Caco-2 (cell line): ENCODE measurements at regions of chr19 and their contacts with region 1.

Region 1: DNA sequence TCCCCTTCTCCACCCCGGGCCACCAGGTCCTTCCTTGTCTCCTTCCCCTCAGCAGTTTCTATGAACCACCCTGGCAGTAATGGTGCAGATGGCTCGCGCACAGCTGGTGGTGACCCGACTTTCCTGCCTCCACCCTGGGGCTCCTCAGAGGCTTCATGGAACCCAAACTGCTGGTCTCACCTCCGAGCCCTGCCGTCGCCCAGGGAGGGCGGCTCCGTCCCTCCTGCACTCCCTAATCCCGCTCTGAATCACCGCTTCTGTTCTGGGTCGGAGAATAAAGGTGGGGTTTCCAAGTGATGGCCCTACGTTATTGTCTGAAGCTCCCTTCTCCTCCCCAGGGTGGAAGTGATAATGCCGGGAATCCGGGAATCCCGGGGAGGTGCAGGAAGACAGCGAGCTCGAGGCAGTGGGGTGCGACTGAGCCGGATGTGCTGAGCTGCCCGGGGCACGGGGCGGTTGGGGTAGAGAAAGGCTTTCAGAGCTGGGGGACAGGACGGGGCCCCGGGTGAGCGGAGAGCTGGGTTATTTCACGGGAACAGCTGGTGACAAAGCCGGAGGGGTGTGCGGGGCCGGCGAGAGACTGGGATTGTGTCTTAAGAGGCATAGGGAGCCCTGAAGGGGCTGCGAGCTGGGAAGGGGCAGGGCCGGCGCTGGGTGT is 711 bp downstream of the FUT2 start:
- DNase-seq: peak in 1 of 2 experiments; percentile 38
- H3K4me3 ChIP-seq: peak overlapping the region; percentile 72
- H3K4me3 Mint-ChIP-seq: peak overlapping the region; percentile 99
- H3K27ac Mint-ChIP-seq: peak overlapping the region; percentile 90
- H3K4me1 ChIP-seq: peaks cover 17% of the 10 kb centered on the region
- H3K4me1 Mint-ChIP-seq: peaks cover 7% of the 10 kb centered on the region
- H3K27me3 ChIP-seq: no peaks in the 10 kb centered on the region
- H3K27me3 Mint-ChIP-seq: no peaks in the 10 kb centered on the region
- CTCF ChIP-seq: no peak

Region 2: GRCh38 chr19:48674921-48675824 is 21.3 kb before region 1 on chr19:
- CTCF ChIA-PET with region 1: interaction called, 12 read pairs
- POLR2A ChIA-PET with region 1: no interaction called
- intact Hi-C with region 1: loop called (anchors 1 kb)
- DNase-seq: peak; percentile 88 to 90
- H3K4me3 ChIP-seq: no peak overlapping the region
- H3K4me3 Mint-ChIP-seq: no peak overlapping the region
- H3K27ac Mint-ChIP-seq: peak overlapping the region; percentile 46
- H3K4me1 ChIP-seq: peaks cover 6% of the 10 kb centered on the region
- H3K4me1 Mint-ChIP-seq: peaks cover 13% of the 10 kb centered on the region
- H3K27me3 ChIP-seq: no peaks in the 10 kb centered on the region
- H3K27me3 Mint-ChIP-seq: no peaks in the 10 kb centered on the region
- CTCF ChIP-seq: peak; percentile 88 to 95

Region 3: GRCh38 chr19:48713864-48714758 is 17.6 kb after region 1 on chr19:
- CTCF ChIA-PET with region 1: interaction called, 21 read pairs
- POLR2A ChIA-PET with region 1: interaction called, 12 read pairs
- intact Hi-C with region 1: loop called (anchors 1 kb)
- DNase-seq: peak; percentile 100
- H3K4me3 ChIP-seq: peak overlapping the region; percentile 75
- H3K4me3 Mint-ChIP-seq: peak overlapping the region; percentile 84
- H3K27ac Mint-ChIP-seq: peak overlapping the region; percentile 90
- H3K4me1 ChIP-seq: peaks cover 16% of the 10 kb centered on the region
- H3K4me1 Mint-ChIP-seq: peaks cover 33% of the 10 kb centered on the region
- H3K27me3 ChIP-seq: no peaks in the 10 kb centered on the region
- H3K27me3 Mint-ChIP-seq: no peaks in the 10 kb centered on the region
- CTCF ChIP-seq: no peak

Region 4: DNA sequence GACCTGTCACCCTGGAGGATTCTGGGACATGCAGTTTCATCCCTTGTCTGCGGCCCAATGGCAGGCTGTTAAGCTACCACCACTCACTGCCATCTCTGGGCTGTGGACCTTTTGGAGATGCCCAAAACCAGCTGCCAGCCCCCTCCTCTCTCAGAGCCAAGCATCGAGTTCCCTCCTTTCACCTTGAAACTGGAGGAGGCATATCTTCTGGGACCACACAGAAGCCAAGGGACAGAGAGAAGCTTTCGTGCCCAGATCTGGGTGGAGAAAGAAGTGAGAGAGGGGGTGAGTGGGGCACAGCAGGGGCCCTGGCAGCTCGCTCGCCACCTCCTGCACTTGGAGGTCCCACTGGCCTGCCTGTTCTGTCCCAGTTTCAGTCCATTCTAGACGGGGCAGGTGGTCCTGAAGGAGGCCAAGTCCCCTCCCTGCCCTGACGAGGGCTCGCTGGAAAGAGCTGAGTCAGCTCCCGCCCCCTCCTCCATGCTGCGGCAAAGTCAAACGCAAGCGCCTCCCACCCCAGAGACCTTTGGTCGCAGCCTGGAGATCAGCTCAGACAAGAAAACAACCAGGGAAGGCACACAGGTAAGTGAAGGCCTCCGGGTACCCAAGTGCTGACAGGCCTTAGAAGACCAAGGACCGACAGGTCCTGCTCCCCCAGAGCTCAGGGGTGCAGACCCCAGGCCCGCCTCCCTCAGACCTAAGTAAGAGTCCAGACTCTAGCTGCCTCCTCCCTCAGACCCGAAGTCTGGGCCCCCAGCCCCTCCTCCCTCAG is 110.5 kb after region 1 on chr19:
- CTCF ChIA-PET with region 1: no interaction called
- POLR2A ChIA-PET with region 1: interaction called, 13 read pairs
- intact Hi-C with region 1: no loop called
- DNase-seq: peak; percentile 83 to 85
- H3K4me3 ChIP-seq: peak overlapping the region; percentile 28
- H3K4me3 Mint-ChIP-seq: peak overlapping the region; percentile 30
- H3K27ac Mint-ChIP-seq: peak overlapping the region; percentile 7
- H3K4me1 ChIP-seq: peaks cover 25% of the 10 kb centered on the region
- H3K4me1 Mint-ChIP-seq: peaks cover 30% of the 10 kb centered on the region
- H3K27me3 ChIP-seq: no peaks in the 10 kb centered on the region
- H3K27me3 Mint-ChIP-seq: no peaks in the 10 kb centered on the region
- CTCF ChIP-seq: no peak

Region 5: GRCh38 chr19:49200238-49200862 is 503.9 kb after region 1 on chr19:
- CTCF ChIA-PET with region 1: no interaction called
- POLR2A ChIA-PET with region 1: no interaction called
- intact Hi-C with region 1: no loop called
- DNase-seq: peak; percentile 31 to 55
- H3K4me3 ChIP-seq: no peak overlapping the region
- H3K4me3 Mint-ChIP-seq: no peak overlapping the region
- H3K27ac Mint-ChIP-seq: peak overlapping the region; percentile 20
- H3K4me1 ChIP-seq: no peaks in the 10 kb centered on the region
- H3K4me1 Mint-ChIP-seq: no peaks in the 10 kb centered on the region
- H3K27me3 ChIP-seq: no peaks in the 10 kb centered on the region
- H3K27me3 Mint-ChIP-seq: no peaks in the 10 kb centered on the region
- CTCF ChIP-seq: no peak